Heart right ventricle (tissue), 16 donors: ENCODE measurements at regions of chr12 and their contacts with region 1.

Region 1: DNA sequence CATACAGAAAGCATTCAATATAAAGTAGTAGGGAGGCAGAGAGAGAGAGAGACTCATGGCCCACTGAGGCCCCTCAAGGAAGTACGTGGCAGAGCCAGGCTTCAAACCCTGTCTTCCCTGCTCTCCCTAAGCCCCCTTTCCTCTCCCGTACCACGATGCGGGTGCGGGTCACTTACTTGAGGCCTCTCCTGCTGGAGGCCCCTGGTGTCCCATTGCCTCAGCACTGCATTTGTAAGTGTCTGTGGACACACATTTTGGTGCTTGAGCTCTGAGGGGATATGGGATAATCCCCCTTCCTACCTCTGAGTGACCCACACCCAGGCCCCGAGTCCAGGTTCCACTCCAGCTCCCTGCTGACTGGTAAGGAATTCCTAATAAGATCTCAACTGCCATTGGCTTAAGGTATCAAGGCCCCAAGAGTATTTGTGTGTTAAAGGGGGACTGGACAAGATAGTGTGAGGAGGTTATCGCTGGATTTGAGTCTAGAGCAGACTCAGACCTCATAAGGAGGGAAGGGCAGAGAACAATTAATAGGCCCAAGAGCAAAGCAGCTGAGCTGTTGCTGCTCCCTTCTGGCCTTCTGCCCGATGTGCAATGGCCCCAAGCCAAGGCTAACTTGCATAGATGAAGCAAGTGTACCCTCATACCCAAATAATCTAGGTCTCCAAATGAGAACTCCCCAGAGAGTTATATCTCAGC is 71.9 kb downstream of the CRACR2A start:
- DNase-seq: peak; percentile 57 to 81
- ATAC-seq: peak in 4 of 8 donors; percentile 25 to 50 (median 46)
- H3K4me3 ChIP-seq: no peak overlapping the region
- H3K27ac ChIP-seq: peak overlapping the region in 1 of 10 donors; percentile 11
- H3K4me1 ChIP-seq: peaks cover 2 to 46% (median 22%) of the 10 kb centered on the region in 9 donors
- H3K27me3 ChIP-seq: no peaks in the 10 kb centered on the region
- CTCF ChIP-seq: peak in 6 of 9 donors; percentile 11 to 62 (median 48)

Region 2: DNA sequence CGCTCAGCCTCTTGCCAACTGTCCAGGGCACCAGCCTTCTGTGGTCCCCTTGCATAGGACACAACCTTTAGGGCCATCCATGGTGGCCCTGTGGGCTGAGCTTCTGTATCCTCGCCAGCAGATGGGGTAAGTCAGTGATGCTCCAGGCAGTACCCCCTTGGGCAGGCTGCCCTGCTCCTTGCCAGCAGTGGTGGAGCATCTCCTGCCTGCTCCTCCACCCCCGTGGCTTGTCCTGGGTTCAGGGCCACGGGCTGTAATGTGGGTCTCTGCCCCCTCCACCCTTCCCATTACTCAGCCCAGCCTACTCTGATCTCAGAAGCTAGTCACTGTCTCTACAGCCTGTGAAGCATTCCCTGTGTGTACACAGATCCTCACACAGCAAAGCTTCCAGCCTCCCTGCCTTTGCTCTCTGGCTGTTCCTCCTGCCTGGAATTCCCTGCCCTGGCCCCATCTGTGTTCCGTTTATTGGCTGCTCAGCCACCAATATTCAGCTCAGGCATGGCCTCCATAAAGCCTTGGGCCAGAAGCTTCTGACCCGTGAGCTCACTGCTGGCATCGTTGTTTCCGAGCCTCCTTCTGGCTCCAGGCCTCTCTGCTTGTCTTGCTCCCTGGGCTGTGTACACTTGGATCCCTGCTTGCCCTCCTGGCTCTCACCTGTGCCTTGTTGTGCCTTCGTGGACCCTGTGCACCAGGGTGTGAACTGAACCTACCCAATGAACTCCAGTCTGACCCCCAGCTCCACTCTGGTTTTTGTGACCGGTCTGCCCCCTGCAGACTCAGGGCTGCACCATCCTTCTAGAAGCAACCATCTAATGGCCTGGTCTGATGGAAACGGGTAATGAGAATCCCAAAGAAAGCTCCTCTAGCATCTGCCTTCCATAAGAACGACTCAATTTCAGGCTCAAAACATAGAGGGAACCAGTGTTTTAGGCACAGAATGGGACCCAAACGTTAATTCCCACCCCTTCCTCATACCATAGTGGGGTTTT is 367.1 kb before region 1 on chr12:
- intact Hi-C with region 1: loop called in 2 of 10 experiments (anchors 10 kb)
- DNase-seq: no peak
- ATAC-seq: peak; percentile 3 to 48 (median 18)
- H3K4me3 ChIP-seq: no peak overlapping the region
- H3K27ac ChIP-seq: peak overlapping the region in 3 of 10 donors; percentile 33 to 68 (median 51)
- H3K4me1 ChIP-seq: peaks cover 10 to 45% (median 26%) of the 10 kb centered on the region in 9 donors
- H3K27me3 ChIP-seq: no peaks in the 10 kb centered on the region
- CTCF ChIP-seq: peak in 8 of 9 donors; percentile 9 to 48 (median 42)

Region 3: DNA sequence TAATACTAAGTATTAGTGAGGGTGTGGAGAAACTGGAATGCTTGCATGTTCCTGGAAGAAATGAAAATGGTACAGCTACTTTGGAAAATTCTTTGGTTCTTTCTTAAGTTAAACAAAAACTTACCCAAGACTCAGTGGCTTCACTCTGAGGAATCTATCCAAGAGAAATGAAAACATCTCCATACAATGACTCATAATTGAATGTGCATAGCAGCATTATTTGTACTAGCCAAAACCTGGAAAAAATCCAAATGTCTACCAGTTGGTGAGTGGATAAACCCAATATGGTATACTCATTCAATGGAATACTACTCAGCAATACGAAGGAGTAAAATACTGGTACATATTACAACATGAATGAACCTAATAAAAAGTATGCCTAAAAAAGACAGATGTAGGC is 89.8 kb after region 1 on chr12:
- intact Hi-C with region 1: loop called in 3 of 10 experiments (anchors 5 to 10 kb)
- DNase-seq: no peak
- ATAC-seq: no peak
- H3K4me3 ChIP-seq: no peak overlapping the region
- H3K27ac ChIP-seq: no peak overlapping the region
- H3K4me1 ChIP-seq: peaks cover 0 to 24% (median 6%) of the 10 kb centered on the region in 9 donors
- H3K27me3 ChIP-seq: no peaks in the 10 kb centered on the region
- CTCF ChIP-seq: no peak